IMR-90 (cell line): ENCODE measurements at regions of chr11 and their contacts with region 1.

Region 1: GRCh38 chr11:129042503-129042902 is 99.8 kb upstream of the TP53AIP1 start:
- DNase-seq: no peak
- ATAC-seq: no peak
- H3K4me3 ChIP-seq: no peak overlapping the region
- H3K27ac ChIP-seq: no peak overlapping the region
- H3K4me1 ChIP-seq: peaks cover 2% of the 10 kb centered on the region
- H3K27me3 ChIP-seq: no peaks in the 10 kb centered on the region
- CTCF ChIP-seq: no peak
- POLR2A ChIP-seq: no peak
- RAD21 ChIP-seq: no peak

Region 2: DNA sequence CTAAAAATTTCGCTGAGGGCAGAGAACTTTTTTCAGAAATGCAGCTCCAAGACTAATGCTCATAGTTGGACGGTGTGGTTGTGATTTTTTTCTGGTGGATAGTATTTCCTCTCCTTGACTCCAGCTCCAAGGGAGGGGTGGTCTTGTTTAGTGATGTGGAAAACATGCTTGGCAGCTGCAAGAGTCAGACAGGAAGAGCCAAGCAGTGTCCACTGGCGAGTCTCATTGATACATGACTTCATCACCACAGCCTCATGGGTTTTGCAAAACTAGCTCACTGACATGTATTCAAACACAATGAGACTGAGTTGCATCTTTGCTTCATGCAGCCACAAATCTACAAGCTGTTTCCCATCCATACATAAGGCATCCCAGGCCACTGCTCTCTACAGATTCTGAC is 168.1 kb before region 1 on chr11:
- CTCF ChIA-PET with region 1: no interaction called
- POLR2A ChIA-PET with region 1: interaction called, 14 read pairs
- dilution Hi-C with region 1: no loop called
- in situ Hi-C with region 1: no loop called
- intact Hi-C with region 1: no loop called
- DNase-seq: peak; percentile 22
- ATAC-seq: no peak
- H3K4me3 ChIP-seq: no peak overlapping the region
- H3K27ac ChIP-seq: no peak overlapping the region
- H3K4me1 ChIP-seq: no peaks in the 10 kb centered on the region
- H3K27me3 ChIP-seq: peaks cover 73% of the 10 kb centered on the region
- CTCF ChIP-seq: no peak
- POLR2A ChIP-seq: no peak
- RAD21 ChIP-seq: no peak

Region 3: GRCh38 chr11:128985880-128986279 is 56.6 kb before region 1 on chr11:
- CTCF ChIA-PET with region 1: no interaction called
- POLR2A ChIA-PET with region 1: no interaction called
- dilution Hi-C with region 1: no loop called
- in situ Hi-C with region 1: no loop called
- intact Hi-C with region 1: no loop called
- DNase-seq: no peak
- ATAC-seq: no peak
- H3K4me3 ChIP-seq: no peak overlapping the region
- H3K27ac ChIP-seq: no peak overlapping the region
- H3K4me1 ChIP-seq: no peaks in the 10 kb centered on the region
- H3K27me3 ChIP-seq: no peaks in the 10 kb centered on the region
- CTCF ChIP-seq: no peak
- POLR2A ChIP-seq: no peak
- RAD21 ChIP-seq: no peak

Region 4: GRCh38 chr11:129061466-129062194 is 19.1 kb after region 1 on chr11:
- CTCF ChIA-PET with region 1: no interaction called
- POLR2A ChIA-PET with region 1: interaction called, 12 read pairs
- dilution Hi-C with region 1: no loop called
- in situ Hi-C with region 1: no loop called
- intact Hi-C with region 1: no loop called
- DNase-seq: peak; percentile 50
- ATAC-seq: no peak
- H3K4me3 ChIP-seq: no peak overlapping the region
- H3K27ac ChIP-seq: no peak overlapping the region
- H3K4me1 ChIP-seq: no peaks in the 10 kb centered on the region
- H3K27me3 ChIP-seq: no peaks in the 10 kb centered on the region
- CTCF ChIP-seq: no peak
- POLR2A ChIP-seq: no peak
- RAD21 ChIP-seq: no peak